Psoas muscle (tissue), 8 donors: ENCODE measurements at regions of chr15 and their contacts with region 1.

Region 1: GRCh38 chr15:75929799-75930565 is 26.3 kb downstream of the FBXO22 start:
- DNase-seq: no peak
- ATAC-seq: peak in 2 of 4 donors; percentile 67 to 77
- H3K4me3 ChIP-seq: no peak overlapping the region
- H3K27ac ChIP-seq: no peak overlapping the region
- H3K4me1 ChIP-seq: peaks cover 14% of the 10 kb centered on the region
- H3K27me3 ChIP-seq: no peaks in the 10 kb centered on the region
- CTCF ChIP-seq: no peak

Region 2: GRCh38 chr15:76380249-76380648 is 450.3 kb after region 1 on chr15:
- intact Hi-C with region 1: no loop called
- DNase-seq: no peak
- ATAC-seq: no peak
- H3K4me3 ChIP-seq: no peak overlapping the region
- H3K27ac ChIP-seq: no peak overlapping the region
- H3K4me1 ChIP-seq: no peaks in the 10 kb centered on the region
- H3K27me3 ChIP-seq: no peaks in the 10 kb centered on the region
- CTCF ChIP-seq: no peak

Region 3: DNA sequence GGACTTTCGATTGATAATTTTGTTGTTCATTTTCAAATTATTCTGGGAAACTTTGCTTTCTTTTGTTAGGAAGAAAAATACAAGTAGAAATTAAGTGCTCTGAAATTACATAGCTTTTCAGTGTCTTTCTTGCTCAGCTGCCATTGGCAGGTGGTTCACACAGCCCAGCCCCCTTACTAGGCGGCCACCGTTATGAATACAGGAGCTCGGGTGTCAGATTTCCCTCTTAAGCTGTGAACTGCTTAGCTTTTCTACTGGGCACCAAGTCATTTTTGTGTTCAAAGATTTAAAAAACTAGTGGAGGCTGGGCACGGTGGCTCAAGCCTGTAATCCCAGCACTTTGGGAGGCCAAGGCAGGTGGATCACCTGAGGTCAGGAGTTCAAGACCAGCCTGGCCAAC is 1545.9 kb after region 1 on chr15:
- intact Hi-C with region 1: loop called in 1 of 2 experiments (anchors 10 kb)
- DNase-seq: no peak
- ATAC-seq: peak in 3 of 4 donors; percentile 57 to 62 (median 61)
- H3K4me3 ChIP-seq: no peak overlapping the region
- H3K27ac ChIP-seq: peak overlapping the region; percentile 54
- H3K4me1 ChIP-seq: peaks cover 49% of the 10 kb centered on the region
- H3K27me3 ChIP-seq: no peaks in the 10 kb centered on the region
- CTCF ChIP-seq: no peak